MCF 10A (cell line): ENCODE measurements at regions of chr1 and their contacts with region 1.

Region 1: DNA sequence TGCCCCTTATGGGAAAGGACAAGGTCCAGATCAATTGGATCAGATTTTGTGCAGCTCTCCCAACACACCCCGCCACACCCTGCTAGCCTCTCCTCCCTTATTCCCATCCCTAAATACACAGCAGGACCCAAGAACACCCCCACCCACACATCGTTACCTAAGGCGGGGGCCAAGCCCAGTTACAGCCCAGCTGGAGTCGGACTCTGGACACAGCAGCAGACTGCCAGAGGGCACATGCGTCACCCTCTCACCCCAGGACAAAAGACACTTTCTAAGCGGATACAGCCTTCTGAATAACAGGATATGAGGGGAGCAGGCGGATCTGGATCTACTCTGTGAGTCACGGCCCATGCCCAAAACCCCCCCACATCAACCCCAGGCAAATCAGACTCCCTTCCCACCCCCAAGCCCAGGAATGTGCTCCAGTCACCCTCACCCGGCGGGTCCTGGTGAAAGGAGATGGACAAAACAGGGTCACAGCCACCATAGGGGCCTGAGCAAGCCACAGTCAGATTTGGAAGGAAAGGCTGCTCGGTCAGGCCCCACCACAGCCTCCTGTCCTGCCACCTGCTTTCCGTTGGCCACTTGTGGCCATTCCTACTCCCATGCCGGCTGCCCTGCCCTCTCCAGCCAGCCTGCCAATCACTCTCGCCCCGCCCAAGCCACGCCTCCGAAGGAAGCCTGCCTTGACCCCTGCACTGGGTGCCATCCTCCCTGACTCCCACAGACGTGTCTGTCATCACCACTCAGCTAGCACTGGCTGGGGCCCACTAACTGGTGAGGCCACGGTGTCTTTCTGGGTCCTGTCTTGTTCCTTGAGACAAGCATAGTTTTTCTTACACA is 4.0 kb downstream of the S100A16 start:
- DNase-seq: peak; percentile 99
- H3K4me3 Mint-ChIP-seq: peak overlapping the region; percentile 90
- H3K27ac Mint-ChIP-seq: peak overlapping the region; percentile 94
- H3K4me1 Mint-ChIP-seq: peaks cover 45% of the 10 kb centered on the region
- H3K27me3 Mint-ChIP-seq: no peaks in the 10 kb centered on the region
- CTCF ChIP-seq: no peak

Region 2: GRCh38 chr1:153488731-153489130 is 120.2 kb before region 1 on chr1:
- CTCF ChIA-PET with region 1: no interaction called
- POLR2A ChIA-PET with region 1: no interaction called
- intact Hi-C with region 1: no loop called
- DNase-seq: peak; percentile 60
- H3K4me3 Mint-ChIP-seq: no peak overlapping the region
- H3K27ac Mint-ChIP-seq: no peak overlapping the region
- H3K4me1 Mint-ChIP-seq: peaks cover 55% of the 10 kb centered on the region
- H3K27me3 Mint-ChIP-seq: peaks cover 30% of the 10 kb centered on the region
- CTCF ChIP-seq: no peak

Region 3: DNA sequence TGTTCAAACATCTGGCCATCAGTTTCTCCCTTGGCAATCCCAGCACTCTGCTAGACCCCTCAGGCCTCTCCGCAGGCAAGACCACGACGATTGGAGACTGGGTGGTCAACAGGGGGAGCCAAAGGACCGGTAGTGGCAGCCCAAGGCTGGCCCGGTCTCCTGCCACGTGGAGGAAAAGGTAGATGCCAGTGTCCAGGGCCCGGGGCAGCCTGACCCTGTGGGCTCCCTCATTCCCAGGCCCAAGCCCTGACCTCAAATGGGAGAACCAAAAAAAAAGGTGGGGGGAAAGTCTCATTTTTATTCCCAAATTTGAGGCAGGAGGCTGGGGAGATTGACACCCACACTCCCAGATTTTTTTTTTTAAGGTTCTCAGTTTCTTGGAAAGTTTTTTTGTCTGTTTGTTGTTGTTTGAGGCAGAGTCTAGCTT is 98.0 kb before region 1 on chr1:
- CTCF ChIA-PET with region 1: interaction called, 103 read pairs
- POLR2A ChIA-PET with region 1: interaction called, 15 read pairs
- intact Hi-C with region 1: no loop called
- DNase-seq: peak; percentile 87
- H3K4me3 Mint-ChIP-seq: no peak overlapping the region
- H3K27ac Mint-ChIP-seq: peak overlapping the region; percentile 73
- H3K4me1 Mint-ChIP-seq: peaks cover 60% of the 10 kb centered on the region
- H3K27me3 Mint-ChIP-seq: no peaks in the 10 kb centered on the region
- CTCF ChIP-seq: peak; percentile 100

Region 4: GRCh38 chr1:153545067-153546055 is 63.6 kb before region 1 on chr1 and contains the start of gene S100A4:
- CTCF ChIA-PET with region 1: interaction called, 4 read pairs
- POLR2A ChIA-PET with region 1: interaction called, 11 read pairs
- intact Hi-C with region 1: no loop called
- DNase-seq: peak; percentile 99
- H3K4me3 Mint-ChIP-seq: peak within 1 kb of the TSS; percentile 72
- H3K27ac Mint-ChIP-seq: peak within 1 kb of the TSS; percentile 92
- H3K4me1 Mint-ChIP-seq: peaks cover 89% of the 10 kb centered on the region
- H3K27me3 Mint-ChIP-seq: no peaks in the 10 kb centered on the region
- CTCF ChIP-seq: no peak
- total RNA-seq, gene S100A4: 27.2 and 60.7 TPM in 2 replicates

Region 5: DNA sequence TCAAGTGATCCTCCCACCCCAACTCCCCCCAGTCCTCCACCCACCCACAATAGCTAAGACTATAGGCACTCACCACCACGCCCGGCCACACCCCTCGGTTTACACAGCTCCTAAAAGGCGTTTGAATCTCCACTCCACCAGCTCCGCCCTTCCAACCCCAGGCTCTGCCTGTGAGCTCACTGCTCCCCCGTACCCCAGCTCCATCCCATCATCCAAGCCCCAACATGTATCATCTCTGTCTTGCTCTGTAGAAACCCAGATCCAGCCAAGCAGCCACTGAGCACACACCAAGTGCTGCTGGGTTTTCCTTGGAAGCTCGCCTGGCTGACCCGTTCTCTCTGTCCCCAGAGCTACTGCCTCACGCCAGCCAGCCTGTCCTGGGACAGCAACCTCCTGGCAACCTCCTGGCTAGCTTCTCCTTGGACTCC is 31.3 kb before region 1 on chr1:
- CTCF ChIA-PET with region 1: interaction called, 214 read pairs
- POLR2A ChIA-PET with region 1: interaction called, 280 read pairs
- intact Hi-C with region 1: loop called (anchors 2 kb)
- DNase-seq: no peak
- H3K4me3 Mint-ChIP-seq: no peak overlapping the region
- H3K27ac Mint-ChIP-seq: no peak overlapping the region
- H3K4me1 Mint-ChIP-seq: peaks cover 25% of the 10 kb centered on the region
- H3K27me3 Mint-ChIP-seq: no peaks in the 10 kb centered on the region
- CTCF ChIP-seq: no peak

Region 6: DNA sequence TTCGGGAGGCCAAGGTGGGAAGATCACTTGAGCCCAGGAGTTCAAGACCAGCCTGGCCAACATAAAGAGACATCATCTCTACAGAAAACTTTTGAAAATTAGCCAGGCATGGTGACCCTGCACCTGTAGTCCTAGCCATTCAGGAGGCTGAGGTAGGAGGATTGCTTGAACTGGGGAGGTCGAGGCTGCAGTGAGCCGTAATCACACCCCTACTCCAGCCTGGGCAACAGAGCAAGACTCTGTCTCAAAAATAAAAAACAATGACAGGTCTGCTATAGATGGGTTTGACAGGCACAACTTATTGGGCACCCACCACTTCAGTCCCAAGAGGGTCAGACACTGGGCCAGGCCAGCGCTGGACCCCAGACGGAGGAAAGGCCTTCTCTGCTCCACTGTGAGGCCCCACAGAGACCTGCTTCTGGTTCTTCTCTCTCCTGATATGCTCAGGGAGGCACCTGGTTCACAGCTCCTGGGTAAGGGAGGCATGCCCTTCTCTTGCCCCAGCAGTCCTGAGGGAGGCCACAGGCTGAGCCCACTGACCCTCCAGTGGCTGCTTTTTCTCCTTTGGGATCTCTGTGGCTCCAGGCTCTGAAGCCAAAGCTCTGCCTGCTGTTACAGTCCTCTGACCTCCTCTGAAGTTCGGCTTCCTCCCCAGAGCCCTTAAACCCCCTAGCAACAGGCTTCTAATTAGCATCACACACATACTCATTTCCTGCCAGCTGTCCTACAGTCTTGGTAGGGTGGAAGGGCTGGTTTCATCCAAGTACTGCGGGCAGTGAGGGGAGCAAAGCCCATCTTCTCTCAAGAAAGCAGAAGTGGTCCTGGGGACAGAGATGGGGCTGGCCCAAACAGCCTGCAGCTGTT is 10.4 kb before region 1 on chr1:
- CTCF ChIA-PET with region 1: interaction called, 6 read pairs
- POLR2A ChIA-PET with region 1: interaction called, 1,272 read pairs
- intact Hi-C with region 1: loop called (anchors 2 kb)
- DNase-seq: no peak
- H3K4me3 Mint-ChIP-seq: no peak overlapping the region
- H3K27ac Mint-ChIP-seq: peak overlapping the region; percentile 14
- H3K4me1 Mint-ChIP-seq: peaks cover 12% of the 10 kb centered on the region
- H3K27me3 Mint-ChIP-seq: no peaks in the 10 kb centered on the region
- CTCF ChIP-seq: no peak

Region 7: DNA sequence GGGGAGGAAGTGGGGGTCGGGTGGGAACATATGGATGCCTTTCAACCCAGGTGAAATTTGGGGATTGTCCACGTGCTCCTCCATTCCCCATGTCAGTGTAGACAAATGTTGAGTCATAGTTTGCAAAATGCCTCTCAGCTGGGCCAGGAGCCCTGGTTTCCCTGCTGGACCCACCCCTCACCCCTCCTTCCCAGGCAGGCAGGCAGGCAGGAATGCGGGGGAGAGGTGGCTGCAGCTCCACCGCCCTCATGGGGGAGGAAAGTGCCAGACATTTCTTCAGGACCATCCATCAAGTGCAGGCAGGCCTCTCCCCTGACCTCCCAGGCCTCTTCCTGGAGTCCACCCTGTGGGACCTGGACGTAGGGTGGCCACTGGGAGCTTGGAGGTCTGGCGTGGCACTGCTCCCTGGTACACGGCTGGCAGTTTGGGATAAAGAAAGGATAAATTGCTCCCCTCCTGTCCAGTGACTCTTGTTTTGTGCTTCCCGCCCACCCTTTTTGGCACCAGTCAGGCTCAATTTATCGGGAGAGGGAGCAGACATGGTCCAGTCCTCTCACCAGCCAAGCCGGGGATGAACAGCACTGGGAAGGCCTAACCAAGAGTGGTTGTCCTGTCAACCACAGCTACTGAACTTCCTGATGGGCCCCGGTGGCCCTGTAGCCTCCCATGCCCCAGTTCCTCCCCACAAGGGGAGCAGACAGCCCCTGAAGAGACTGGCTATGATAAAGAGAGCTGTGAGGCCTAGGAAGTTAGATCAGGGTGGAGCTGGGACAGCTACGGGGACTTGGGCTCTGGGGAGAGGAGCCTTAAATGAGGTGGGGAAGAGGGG is 88.4 kb after region 1 on chr1:
- CTCF ChIA-PET with region 1: no interaction called
- POLR2A ChIA-PET with region 1: no interaction called
- intact Hi-C with region 1: no loop called
- DNase-seq: peak; percentile 80
- H3K4me3 Mint-ChIP-seq: no peak overlapping the region
- H3K27ac Mint-ChIP-seq: peak overlapping the region; percentile 29
- H3K4me1 Mint-ChIP-seq: peaks cover 17% of the 10 kb centered on the region
- H3K27me3 Mint-ChIP-seq: no peaks in the 10 kb centered on the region
- CTCF ChIP-seq: no peak

Region 8: GRCh38 chr1:153967082-153968000 is 358.4 kb after region 1 on chr1 and contains the start of gene CREB3L4:
- CTCF ChIA-PET with region 1: interaction called, 3 read pairs
- POLR2A ChIA-PET with region 1: interaction called, 10 read pairs
- intact Hi-C with region 1: no loop called
- DNase-seq: peak; percentile 100
- H3K4me3 Mint-ChIP-seq: peak within 1 kb of the TSS; percentile 95
- H3K27ac Mint-ChIP-seq: peak within 1 kb of the TSS; percentile 94
- H3K4me1 Mint-ChIP-seq: peaks cover 40% of the 10 kb centered on the region
- H3K27me3 Mint-ChIP-seq: no peaks in the 10 kb centered on the region
- CTCF ChIP-seq: peak; percentile 32
- total RNA-seq, gene CREB3L4: 14.7 and 17.6 TPM in 2 replicates